ENCODE measurements at regions of chr2 and their contacts with region 1.

Region 1: GRCh38 chr2:128552806-128553551 is 234.3 kb upstream of the HS6ST1 start:
- DNase-seq: no peak
- ATAC-seq: no peak
- H3K4me3 Mint-ChIP-seq: no peak overlapping the region
- H3K27ac Mint-ChIP-seq: no peak overlapping the region
- H3K4me1 Mint-ChIP-seq: no peaks in the 10 kb centered on the region
- H3K27me3 Mint-ChIP-seq: no peaks in the 10 kb centered on the region
- CTCF ChIP-seq: no peak

Region 2: DNA sequence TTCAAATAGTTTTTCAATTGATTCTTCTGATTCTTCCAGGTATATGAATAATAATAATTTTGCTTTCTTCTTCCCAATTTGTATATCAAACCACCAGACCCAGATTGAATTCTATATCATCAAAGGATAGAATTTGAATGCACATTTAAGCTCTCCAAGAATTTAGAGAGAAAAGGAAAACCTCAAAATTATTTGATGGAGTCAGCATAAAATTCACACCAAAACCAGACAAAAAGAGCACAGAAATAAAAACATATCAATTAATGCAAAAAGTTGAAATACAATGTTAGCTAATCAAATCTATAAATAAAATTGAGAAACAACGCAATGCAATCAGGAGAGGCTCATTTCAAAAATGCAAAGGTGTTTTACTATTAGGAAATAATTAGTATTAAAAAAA is 13.7 kb after region 1 on chr2:
- CTCF ChIA-PET with region 1: no interaction called
- POLR2A ChIA-PET with region 1: no interaction called
- intact Hi-C with region 1: loop called (anchors 2 kb)
- DNase-seq: no peak
- ATAC-seq: no peak
- H3K4me3 Mint-ChIP-seq: no peak overlapping the region
- H3K27ac Mint-ChIP-seq: no peak overlapping the region
- H3K4me1 Mint-ChIP-seq: no peaks in the 10 kb centered on the region
- H3K27me3 Mint-ChIP-seq: no peaks in the 10 kb centered on the region
- CTCF ChIP-seq: no peak